CD8-positive, alpha-beta T cell (primary cell): ENCODE measurements at regions of chr3 and their contacts with region 1.

Region 1: DNA sequence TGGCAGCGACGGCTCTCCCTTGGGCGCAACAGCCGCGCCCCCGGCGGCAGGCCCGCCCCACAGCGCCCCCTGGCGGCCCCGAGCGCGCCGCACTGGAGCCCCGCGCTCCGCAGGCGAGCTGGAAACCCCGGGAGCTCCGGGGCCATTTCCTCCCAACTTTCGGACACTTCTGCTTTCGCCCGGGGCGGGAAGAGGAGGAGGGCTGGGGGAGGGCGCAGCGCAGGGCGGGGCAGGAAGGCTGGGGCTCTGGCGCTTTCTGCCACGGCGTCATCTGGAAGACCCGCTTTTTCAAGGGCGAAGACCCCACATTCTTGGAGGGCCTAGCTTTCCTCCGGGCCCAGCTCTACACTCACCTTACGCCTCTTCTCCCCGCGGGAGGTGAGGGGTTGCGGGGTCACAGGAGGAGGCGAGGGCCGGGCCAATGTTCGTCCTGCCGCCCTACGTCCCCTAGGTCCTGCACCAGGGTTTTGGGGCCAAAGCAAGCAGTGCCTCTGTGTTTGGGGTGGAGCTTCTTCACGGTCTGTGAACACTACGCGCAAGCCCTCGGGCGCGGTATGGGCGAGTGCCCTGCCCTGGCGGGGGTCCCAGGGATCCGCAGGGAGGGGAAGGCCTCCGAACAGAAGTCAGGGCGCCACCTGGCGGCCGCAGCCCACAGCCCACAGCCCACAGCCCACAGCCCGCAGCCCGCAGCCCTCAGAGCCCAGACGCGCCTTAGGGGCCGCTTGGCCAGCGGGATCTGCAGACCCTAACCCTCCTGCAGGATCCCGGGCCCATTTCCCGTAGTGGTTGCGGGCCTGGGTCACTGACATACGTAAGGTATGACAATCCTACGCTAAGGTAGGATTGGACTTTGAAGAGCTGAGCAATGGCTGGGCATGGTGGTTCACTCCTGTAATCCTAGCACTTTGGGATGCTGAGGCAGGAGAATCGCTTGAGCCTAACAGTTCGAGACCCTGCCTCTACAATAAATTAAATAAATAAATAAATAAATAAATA is 31.1 kb downstream of the FOXL2 start:
- DNase-seq: peak; percentile 50 to 89 (median 83)
- ATAC-seq: peak; percentile 89
- H3K4me3 ChIP-seq: peak overlapping the region; percentile 74 to 99
- H3K4me3 Mint-ChIP-seq: peak overlapping the region; percentile 85
- H3K27ac ChIP-seq: peak overlapping the region; percentile 15 to 50
- H3K27ac Mint-ChIP-seq: peak overlapping the region; percentile 52
- H3K4me1 ChIP-seq: no peaks in the 10 kb centered on the region
- H3K4me1 Mint-ChIP-seq: peaks cover 5% of the 10 kb centered on the region
- H3K27me3 ChIP-seq: no peaks in the 10 kb centered on the region
- H3K27me3 Mint-ChIP-seq: peaks cover 7% of the 10 kb centered on the region
- CTCF ChIP-seq: peak; percentile 89

Region 2: DNA sequence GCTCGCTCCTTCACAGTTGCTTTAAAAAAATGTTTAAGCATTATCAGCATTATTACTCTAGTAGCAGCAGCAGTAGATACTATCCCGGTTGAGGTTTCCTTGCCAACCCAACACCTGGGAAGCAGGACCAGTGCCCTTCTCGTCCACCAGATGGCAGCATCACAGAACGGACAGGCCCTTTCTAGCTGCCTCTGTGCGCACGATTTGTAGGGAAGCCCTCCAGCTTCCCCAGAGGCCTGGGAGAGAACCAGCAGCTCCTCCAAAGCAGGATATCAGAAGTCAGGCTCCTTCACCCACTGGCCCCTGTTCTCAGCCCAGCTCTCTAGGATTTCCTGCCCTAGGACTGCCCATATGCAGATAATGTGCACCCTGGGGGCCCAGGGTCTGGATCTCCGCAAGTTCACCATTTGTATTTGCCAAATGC is 498.2 kb before region 1 on chr3:
- CTCF ChIA-PET with region 1: interaction called, 7 read pairs
- POLR2A ChIA-PET with region 1: no interaction called
- intact Hi-C with region 1: loop called in 1 of 2 experiments (anchors 1 kb)
- DNase-seq: peak; percentile 29 to 71 (median 63)
- ATAC-seq: peak; percentile 69
- H3K4me3 ChIP-seq: no peak overlapping the region
- H3K4me3 Mint-ChIP-seq: no peak overlapping the region
- H3K27ac ChIP-seq: no peak overlapping the region
- H3K27ac Mint-ChIP-seq: no peak overlapping the region
- H3K4me1 ChIP-seq: no peaks in the 10 kb centered on the region
- H3K4me1 Mint-ChIP-seq: no peaks in the 10 kb centered on the region
- H3K27me3 ChIP-seq: peaks cover 0 to 3% of the 10 kb centered on the region in 2 experiments
- H3K27me3 Mint-ChIP-seq: peaks cover 7% of the 10 kb centered on the region
- CTCF ChIP-seq: peak; percentile 71

Region 3: GRCh38 chr3:138625707-138626365 is 290.0 kb before region 1 on chr3:
- CTCF ChIA-PET with region 1: interaction called, 12 read pairs
- POLR2A ChIA-PET with region 1: no interaction called
- intact Hi-C with region 1: no loop called
- DNase-seq: no peak
- ATAC-seq: no peak
- H3K4me3 ChIP-seq: no peak overlapping the region
- H3K4me3 Mint-ChIP-seq: no peak overlapping the region
- H3K27ac ChIP-seq: no peak overlapping the region
- H3K27ac Mint-ChIP-seq: no peak overlapping the region
- H3K4me1 ChIP-seq: no peaks in the 10 kb centered on the region
- H3K4me1 Mint-ChIP-seq: no peaks in the 10 kb centered on the region
- H3K27me3 ChIP-seq: no peaks in the 10 kb centered on the region
- H3K27me3 Mint-ChIP-seq: no peaks in the 10 kb centered on the region
- CTCF ChIP-seq: no peak

Region 4: DNA sequence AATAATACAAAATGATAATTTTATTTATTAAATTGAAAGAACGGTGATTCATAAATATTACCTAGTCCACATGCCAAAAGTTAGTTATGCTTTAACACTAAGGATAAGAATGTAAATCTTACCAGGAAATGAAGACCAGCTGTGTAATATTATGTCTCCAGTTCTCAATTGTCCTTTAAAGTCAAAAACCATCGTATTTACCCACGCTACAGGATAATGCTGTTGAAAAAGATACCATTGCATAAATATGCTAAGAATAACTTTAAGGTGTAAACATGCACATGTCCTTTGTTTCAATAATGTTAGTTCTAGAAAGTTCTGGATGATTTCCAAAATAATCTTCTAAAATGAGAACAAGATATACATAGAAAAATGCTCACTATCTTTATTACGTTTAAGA is 203.7 kb before region 1 on chr3:
- CTCF ChIA-PET with region 1: interaction called, 326 read pairs
- POLR2A ChIA-PET with region 1: no interaction called
- intact Hi-C with region 1: no loop called
- DNase-seq: no peak
- ATAC-seq: no peak
- H3K4me3 ChIP-seq: no peak overlapping the region
- H3K4me3 Mint-ChIP-seq: no peak overlapping the region
- H3K27ac ChIP-seq: no peak overlapping the region
- H3K27ac Mint-ChIP-seq: no peak overlapping the region
- H3K4me1 ChIP-seq: no peaks in the 10 kb centered on the region
- H3K4me1 Mint-ChIP-seq: no peaks in the 10 kb centered on the region
- H3K27me3 ChIP-seq: no peaks in the 10 kb centered on the region
- H3K27me3 Mint-ChIP-seq: no peaks in the 10 kb centered on the region
- CTCF ChIP-seq: no peak

Region 5: GRCh38 chr3:138774529-138775253 is 141.1 kb before region 1 on chr3:
- CTCF ChIA-PET with region 1: interaction called, 15 read pairs
- POLR2A ChIA-PET with region 1: interaction called, 3 read pairs
- intact Hi-C with region 1: loop called in 1 of 2 experiments (anchors 10 kb)
- DNase-seq: no peak
- ATAC-seq: no peak
- H3K4me3 ChIP-seq: no peak overlapping the region
- H3K4me3 Mint-ChIP-seq: no peak overlapping the region
- H3K27ac ChIP-seq: no peak overlapping the region
- H3K27ac Mint-ChIP-seq: peak overlapping the region; percentile 49
- H3K4me1 ChIP-seq: peaks cover 7% of the 10 kb centered on the region
- H3K4me1 Mint-ChIP-seq: peaks cover 35% of the 10 kb centered on the region
- H3K27me3 ChIP-seq: no peaks in the 10 kb centered on the region
- H3K27me3 Mint-ChIP-seq: no peaks in the 10 kb centered on the region
- CTCF ChIP-seq: no peak

Region 6: DNA sequence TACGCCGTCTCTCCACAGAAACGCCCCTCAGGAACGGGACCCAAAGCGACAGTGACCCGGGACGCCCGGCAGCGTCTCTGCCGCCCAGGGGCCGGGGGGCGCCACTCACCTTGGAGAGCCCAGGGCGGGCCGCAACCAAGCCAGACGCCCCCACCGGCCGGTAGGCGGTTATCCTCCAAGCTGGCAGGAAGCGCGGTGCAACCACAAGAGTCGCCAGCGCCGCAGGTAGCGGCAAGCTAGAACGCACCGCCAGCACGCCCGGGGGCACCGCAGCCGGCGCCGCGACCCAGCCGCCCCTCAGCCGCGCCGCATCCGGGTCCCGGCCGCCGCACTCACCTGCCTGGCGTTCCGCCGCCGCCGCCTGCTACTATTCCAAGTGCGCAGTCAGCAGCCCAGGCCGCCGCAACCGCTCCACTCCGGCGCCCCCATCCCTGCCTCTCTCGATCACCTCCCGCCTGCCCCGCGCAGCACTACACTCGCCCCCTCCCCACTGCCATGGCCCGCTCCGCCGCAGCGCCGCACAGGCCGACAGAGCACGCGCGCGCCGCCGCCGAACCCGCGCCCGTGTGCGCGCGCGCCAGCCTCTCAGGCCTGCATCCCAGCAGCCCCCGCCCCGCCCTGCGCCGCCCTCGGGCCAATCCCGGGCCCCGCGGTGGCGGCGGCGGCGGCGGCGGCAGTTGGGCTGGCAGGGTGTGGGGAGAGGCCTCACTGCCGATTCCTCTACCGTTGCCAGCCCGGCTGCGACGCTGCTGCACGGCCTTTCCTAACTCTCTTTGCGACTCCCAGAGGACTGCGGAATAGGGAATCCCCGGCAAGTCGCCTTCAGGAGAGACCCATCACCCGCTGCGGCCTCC is 81.2 kb before region 1 on chr3 and contains the start of gene PIK3CB:
- CTCF ChIA-PET with region 1: interaction called, 19 read pairs
- POLR2A ChIA-PET with region 1: interaction called, 3 read pairs
- intact Hi-C with region 1: loop called (anchors 1 to 2 kb)
- DNase-seq: peak; percentile 71 to 93 (median 87)
- ATAC-seq: peak; percentile 86
- H3K4me3 ChIP-seq: peak within 1 kb of the TSS; percentile 73 to 86
- H3K4me3 Mint-ChIP-seq: peak within 1 kb of the TSS; percentile 89
- H3K27ac ChIP-seq: peak within 1 kb of the TSS; percentile 68 to 87
- H3K27ac Mint-ChIP-seq: peak within 1 kb of the TSS; percentile 96
- H3K4me1 ChIP-seq: peaks cover 12% of the 10 kb centered on the region
- H3K4me1 Mint-ChIP-seq: peaks cover 28% of the 10 kb centered on the region
- H3K27me3 ChIP-seq: no peaks in the 10 kb centered on the region
- H3K27me3 Mint-ChIP-seq: no peaks in the 10 kb centered on the region
- CTCF ChIP-seq: no peak
- total RNA-seq, gene PIK3CB: 14.7 to 15.0 TPM

Region 7: DNA sequence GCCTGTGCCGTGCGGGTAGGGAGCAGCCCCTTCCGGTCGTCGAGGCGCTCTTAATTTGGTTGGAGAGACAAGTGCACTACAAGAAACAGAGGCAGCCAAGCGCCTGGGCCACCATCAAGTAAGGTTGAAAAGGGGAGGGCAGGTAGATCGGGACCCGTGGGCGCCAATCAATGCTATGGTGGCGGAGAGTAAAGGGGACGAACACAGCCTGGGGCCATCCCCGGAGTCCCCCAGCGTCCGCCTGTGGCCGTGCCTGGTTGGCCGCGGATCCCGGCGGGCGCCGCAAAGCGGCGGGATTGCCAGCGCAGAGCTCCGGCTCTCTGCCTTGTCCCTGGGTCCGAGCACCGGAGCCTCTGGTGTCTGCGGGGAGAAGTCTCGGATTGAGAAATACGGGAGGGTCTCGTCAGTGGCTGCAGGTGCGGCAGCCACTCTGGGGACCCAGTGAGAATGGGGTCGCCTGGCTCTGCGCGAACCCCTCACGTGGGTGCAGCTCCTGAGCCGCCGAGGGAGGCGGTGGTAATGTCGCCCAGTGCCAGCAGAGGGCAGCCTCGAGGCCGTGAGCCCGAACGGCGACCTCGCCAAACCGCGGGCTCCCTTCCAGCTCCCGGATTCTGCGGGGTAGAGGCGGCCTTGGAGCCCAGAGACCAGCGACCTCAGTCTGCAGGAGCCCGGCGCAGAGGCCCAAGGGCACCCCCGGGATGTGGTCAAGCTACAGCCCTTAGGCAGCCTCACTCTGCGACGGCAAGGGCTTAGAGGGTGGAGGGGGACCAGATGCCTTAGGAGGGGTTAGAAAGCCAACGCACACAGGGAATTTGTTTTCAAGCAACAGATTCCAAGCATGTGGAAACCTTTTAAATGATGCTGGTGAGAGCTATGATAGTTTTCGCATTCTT is 20.3 kb after region 1 on chr3:
- CTCF ChIA-PET with region 1: interaction called, 24 read pairs
- POLR2A ChIA-PET with region 1: no interaction called
- intact Hi-C with region 1: no loop called
- DNase-seq: peak; percentile 41 to 80 (median 72)
- ATAC-seq: peak; percentile 89
- H3K4me3 ChIP-seq: peak overlapping the region; percentile 33 to 50
- H3K4me3 Mint-ChIP-seq: peak overlapping the region; percentile 75
- H3K27ac ChIP-seq: no peak overlapping the region
- H3K27ac Mint-ChIP-seq: no peak overlapping the region
- H3K4me1 ChIP-seq: peaks cover 46% of the 10 kb centered on the region
- H3K4me1 Mint-ChIP-seq: peaks cover 29% of the 10 kb centered on the region
- H3K27me3 ChIP-seq: peaks cover 24 to 44% of the 10 kb centered on the region in 2 experiments
- H3K27me3 Mint-ChIP-seq: peaks cover 64% of the 10 kb centered on the region
- CTCF ChIP-seq: peak; percentile 90

Region 8: GRCh38 chr3:138974462-138974861 is 58.7 kb after region 1 on chr3:
- CTCF ChIA-PET with region 1: no interaction called
- POLR2A ChIA-PET with region 1: no interaction called
- intact Hi-C with region 1: no loop called
- DNase-seq: no peak
- ATAC-seq: no peak
- H3K4me3 ChIP-seq: no peak overlapping the region
- H3K4me3 Mint-ChIP-seq: no peak overlapping the region
- H3K27ac ChIP-seq: no peak overlapping the region
- H3K27ac Mint-ChIP-seq: no peak overlapping the region
- H3K4me1 ChIP-seq: no peaks in the 10 kb centered on the region
- H3K4me1 Mint-ChIP-seq: no peaks in the 10 kb centered on the region
- H3K27me3 ChIP-seq: no peaks in the 10 kb centered on the region
- H3K27me3 Mint-ChIP-seq: peaks cover 15% of the 10 kb centered on the region
- CTCF ChIP-seq: no peak